PC-9 (cell line): ENCODE measurements at regions of chr2 and their contacts with region 1.

Region 1: DNA sequence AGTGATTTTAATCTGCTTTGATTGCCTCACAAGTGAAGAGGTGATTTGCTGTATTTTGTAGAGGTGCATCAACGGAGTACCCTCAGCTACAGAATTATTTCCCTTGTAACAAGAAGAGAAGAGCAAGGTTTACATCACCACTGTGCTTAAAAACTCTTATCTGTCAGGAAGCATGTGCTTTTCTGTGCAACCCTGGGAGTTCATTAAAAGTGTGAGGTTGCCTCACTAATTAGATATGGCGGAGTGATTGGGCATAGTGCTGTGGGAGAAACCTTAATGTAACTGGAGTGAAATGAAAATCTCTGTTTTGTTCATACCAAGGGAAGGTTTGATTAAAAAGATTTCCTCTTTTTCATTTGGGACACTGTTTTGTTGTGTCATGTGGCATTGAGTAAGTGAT is 544.7 kb downstream of the PARD3B start:
- DNase-seq: no peak
- H3K4me3 ChIP-seq: no peak overlapping the region
- H3K27ac ChIP-seq: no peak overlapping the region
- H3K4me1 ChIP-seq: no peaks in the 10 kb centered on the region
- H3K27me3 ChIP-seq: no peaks in the 10 kb centered on the region
- CTCF ChIP-seq: no peak

Region 2: GRCh38 chr2:203918839-203919238 is 1171.1 kb before region 1 on chr2:
- CTCF ChIA-PET with region 1: no interaction called
- POLR2A ChIA-PET with region 1: no interaction called
- intact Hi-C with region 1: no loop called
- DNase-seq: no peak
- H3K4me3 ChIP-seq: no peak overlapping the region
- H3K27ac ChIP-seq: no peak overlapping the region
- H3K4me1 ChIP-seq: no peaks in the 10 kb centered on the region
- H3K27me3 ChIP-seq: no peaks in the 10 kb centered on the region
- CTCF ChIP-seq: no peak

Region 3: GRCh38 chr2:205073433-205074020 is 16.4 kb before region 1 on chr2:
- CTCF ChIA-PET with region 1: no interaction called
- POLR2A ChIA-PET with region 1: no interaction called
- intact Hi-C with region 1: loop called (anchors 1 kb)
- DNase-seq: no peak
- H3K4me3 ChIP-seq: no peak overlapping the region
- H3K27ac ChIP-seq: no peak overlapping the region
- H3K4me1 ChIP-seq: no peaks in the 10 kb centered on the region
- H3K27me3 ChIP-seq: no peaks in the 10 kb centered on the region
- CTCF ChIP-seq: no peak

Region 4: DNA sequence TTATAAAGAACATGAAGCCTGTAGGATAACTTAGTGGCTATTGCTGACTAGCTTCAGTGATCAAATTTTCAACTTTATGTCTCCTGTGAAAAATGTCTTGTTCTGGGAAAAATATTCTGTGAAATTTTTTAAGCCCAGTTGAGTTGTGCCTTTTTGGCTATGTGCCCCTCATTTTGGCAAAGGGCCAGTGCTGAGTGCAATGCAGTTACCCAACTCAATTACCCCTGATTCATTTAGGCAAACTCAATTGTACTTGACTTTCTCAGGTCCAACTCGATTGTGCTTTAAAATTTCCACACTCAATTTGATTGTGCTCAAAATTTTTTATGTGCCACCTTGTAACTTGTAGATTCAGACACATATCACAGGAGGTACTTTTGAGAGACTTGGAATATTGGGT is 43.6 kb after region 1 on chr2:
- CTCF ChIA-PET with region 1: no interaction called
- POLR2A ChIA-PET with region 1: no interaction called
- intact Hi-C with region 1: no loop called
- DNase-seq: no peak
- H3K4me3 ChIP-seq: no peak overlapping the region
- H3K27ac ChIP-seq: no peak overlapping the region
- H3K4me1 ChIP-seq: no peaks in the 10 kb centered on the region
- H3K27me3 ChIP-seq: no peaks in the 10 kb centered on the region
- CTCF ChIP-seq: no peak

Region 5: DNA sequence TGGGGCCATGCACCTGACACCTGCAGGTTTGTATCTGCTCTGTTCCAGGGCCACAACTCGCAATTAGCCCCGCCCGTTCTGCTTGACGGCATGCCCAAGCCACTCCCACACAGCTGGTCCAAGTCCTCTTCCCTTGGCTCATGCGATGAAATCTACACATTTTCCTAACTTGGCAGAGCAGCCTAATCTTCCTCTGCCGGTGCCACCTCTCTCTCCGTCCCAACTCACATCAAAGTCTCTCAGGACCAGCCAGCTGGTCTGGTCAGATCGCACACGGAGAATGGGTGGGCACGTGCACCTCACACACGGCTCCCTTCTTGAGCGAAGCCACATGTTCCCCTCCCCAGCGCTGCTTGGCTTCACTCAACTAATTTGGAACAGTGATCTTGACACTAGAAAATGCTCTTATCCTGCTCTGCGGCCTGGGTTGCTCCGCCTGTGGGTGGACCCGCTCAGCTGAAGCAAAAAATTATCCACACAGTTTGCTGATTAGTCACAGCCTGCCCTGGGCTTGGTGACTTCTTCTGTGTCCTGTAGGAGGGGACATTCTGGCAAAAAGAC is 769.0 kb after region 1 on chr2:
- CTCF ChIA-PET with region 1: no interaction called
- POLR2A ChIA-PET with region 1: no interaction called
- intact Hi-C with region 1: no loop called
- DNase-seq: peak in 1 of 2 experiments; percentile 19
- H3K4me3 ChIP-seq: no peak overlapping the region
- H3K27ac ChIP-seq: no peak overlapping the region
- H3K4me1 ChIP-seq: no peaks in the 10 kb centered on the region
- H3K27me3 ChIP-seq: no peaks in the 10 kb centered on the region
- CTCF ChIP-seq: no peak